CD4-positive, alpha-beta T cell (primary cell): ENCODE measurements at regions of chr21 and their contacts with region 1.

Region 1: DNA sequence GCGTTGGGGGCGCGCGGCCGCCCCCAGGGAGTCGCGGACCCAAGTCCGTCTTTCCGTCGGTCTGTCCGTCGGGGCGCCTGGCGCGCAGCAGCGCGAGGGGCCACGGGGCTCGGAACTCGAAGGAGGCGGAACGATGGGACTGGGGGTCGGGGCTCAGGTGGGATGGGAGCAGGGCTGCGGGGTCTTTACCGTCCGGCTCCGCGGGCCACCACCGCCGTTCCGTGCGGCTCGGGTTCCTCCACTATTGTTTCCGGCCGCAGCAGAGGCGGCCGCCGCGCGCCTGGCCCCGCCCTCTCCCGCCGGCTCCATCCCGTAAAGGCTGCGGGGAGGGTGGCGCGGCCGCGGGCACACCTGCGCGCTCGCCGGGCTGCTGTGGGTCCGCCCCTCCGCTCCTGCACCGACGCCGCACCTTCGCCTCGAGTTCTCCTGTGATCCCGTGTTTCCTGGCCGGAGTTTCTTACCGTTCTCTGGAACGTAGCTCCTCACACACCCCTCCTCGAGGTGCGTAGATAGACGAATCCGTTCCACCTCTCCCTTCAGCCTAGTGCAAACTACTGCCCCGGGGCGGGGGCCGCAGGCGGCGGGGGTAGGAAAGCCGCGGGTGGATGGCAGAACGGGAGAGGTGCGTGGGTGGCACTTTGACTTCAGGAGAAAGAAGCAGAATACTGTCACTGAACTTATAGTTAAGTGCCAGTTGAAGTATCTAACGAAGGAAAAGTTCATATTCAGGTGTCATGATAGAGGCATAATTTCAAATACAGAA is at the start of gene C21orf91:
- DNase-seq: peak; percentile 74 to 93 (median 86)
- ATAC-seq: peak; percentile 85
- H3K4me3 ChIP-seq: peak within 1 kb of the TSS; percentile 82
- H3K4me3 Mint-ChIP-seq: peak within 1 kb of the TSS; percentile 97
- H3K27ac ChIP-seq: peak within 1 kb of the TSS; percentile 88 to 92
- H3K27ac Mint-ChIP-seq: peak within 1 kb of the TSS; percentile 95
- H3K4me1 ChIP-seq: peaks cover 21% of the 10 kb centered on the region
- H3K4me1 Mint-ChIP-seq: peaks cover 53% of the 10 kb centered on the region
- H3K27me3 ChIP-seq: no peaks in the 10 kb centered on the region
- H3K27me3 Mint-ChIP-seq: no peaks in the 10 kb centered on the region
- CTCF ChIP-seq: no peak
- total RNA-seq, gene C21orf91: 40.9 to 42.2 TPM

Region 2: GRCh38 chr21:17512253-17513213 is 306.8 kb before region 1 on chr21 and contains the start of gene CXADR:
- CTCF ChIA-PET with region 1: no interaction called
- POLR2A ChIA-PET with region 1: no interaction called
- intact Hi-C with region 1: loop called in 1 of 2 experiments (anchors 10 kb)
- DNase-seq: peak; percentile 58 to 93 (median 77)
- ATAC-seq: peak; percentile 81
- H3K4me3 ChIP-seq: peak within 1 kb of the TSS; percentile 70
- H3K4me3 Mint-ChIP-seq: peak within 1 kb of the TSS; percentile 92
- H3K27ac ChIP-seq: no peak within 1 kb of the TSS
- H3K27ac Mint-ChIP-seq: peak within 1 kb of the TSS; percentile 40
- H3K4me1 ChIP-seq: peaks cover 21% of the 10 kb centered on the region
- H3K4me1 Mint-ChIP-seq: peaks cover 18% of the 10 kb centered on the region
- H3K27me3 ChIP-seq: no peaks in the 10 kb centered on the region
- H3K27me3 Mint-ChIP-seq: peaks cover 10% of the 10 kb centered on the region
- CTCF ChIP-seq: peak; percentile 56
- total RNA-seq, gene CXADR: 0.52 to 0.53 TPM

Region 3: GRCh38 chr21:17679002-17679600 is 140.2 kb before region 1 on chr21:
- CTCF ChIA-PET with region 1: no interaction called
- POLR2A ChIA-PET with region 1: no interaction called
- intact Hi-C with region 1: loop called in 1 of 2 experiments (anchors 5 kb)
- DNase-seq: peak in 5 of 14 experiments; percentile 1 to 81 (median 79)
- ATAC-seq: peak; percentile 97
- H3K4me3 ChIP-seq: no peak overlapping the region
- H3K4me3 Mint-ChIP-seq: no peak overlapping the region
- H3K27ac ChIP-seq: no peak overlapping the region
- H3K27ac Mint-ChIP-seq: no peak overlapping the region
- H3K4me1 ChIP-seq: no peaks in the 10 kb centered on the region
- H3K4me1 Mint-ChIP-seq: no peaks in the 10 kb centered on the region
- H3K27me3 ChIP-seq: no peaks in the 10 kb centered on the region
- H3K27me3 Mint-ChIP-seq: no peaks in the 10 kb centered on the region
- CTCF ChIP-seq: peak; percentile 81

Region 4: DNA sequence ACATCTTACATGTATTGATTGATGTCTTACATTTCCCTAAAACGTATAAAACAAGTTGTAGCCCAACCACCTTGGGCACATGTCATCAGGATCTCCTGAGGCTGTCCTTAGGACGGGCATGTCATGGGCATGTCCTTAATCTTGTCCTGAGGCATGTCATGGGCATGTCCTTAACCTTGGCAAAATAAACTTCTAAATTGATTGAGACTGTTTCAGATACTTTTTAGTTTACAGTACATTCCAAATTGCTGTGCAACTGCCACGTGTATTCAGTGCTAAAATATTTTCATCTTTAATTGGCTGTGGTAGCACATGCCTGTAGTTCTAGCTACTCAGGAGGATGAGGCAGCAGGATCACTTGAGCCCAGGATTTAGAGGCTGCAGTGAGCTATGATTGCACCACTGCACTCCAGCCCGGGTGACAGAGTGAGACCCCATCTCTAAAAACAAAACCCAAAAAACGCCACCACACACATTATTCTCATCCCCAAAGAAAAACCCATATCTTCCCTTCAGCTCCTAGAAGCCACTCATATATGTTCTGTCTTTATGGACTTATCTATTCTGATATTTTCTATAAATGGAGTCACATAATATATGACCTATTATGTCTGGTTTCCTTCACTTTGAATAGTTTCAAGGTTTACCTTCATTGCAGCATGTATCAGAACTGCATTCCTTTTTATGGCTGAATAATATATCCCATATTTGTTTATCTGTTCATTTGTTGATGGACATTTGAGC is 110.6 kb before region 1 on chr21:
- CTCF ChIA-PET with region 1: no interaction called
- POLR2A ChIA-PET with region 1: no interaction called
- intact Hi-C with region 1: loop called in 1 of 2 experiments (anchors 5 kb)
- DNase-seq: no peak
- ATAC-seq: no peak
- H3K4me3 ChIP-seq: no peak overlapping the region
- H3K4me3 Mint-ChIP-seq: no peak overlapping the region
- H3K27ac ChIP-seq: no peak overlapping the region
- H3K27ac Mint-ChIP-seq: no peak overlapping the region
- H3K4me1 ChIP-seq: no peaks in the 10 kb centered on the region
- H3K4me1 Mint-ChIP-seq: no peaks in the 10 kb centered on the region
- H3K27me3 ChIP-seq: no peaks in the 10 kb centered on the region
- H3K27me3 Mint-ChIP-seq: no peaks in the 10 kb centered on the region
- CTCF ChIP-seq: no peak

Region 5: DNA sequence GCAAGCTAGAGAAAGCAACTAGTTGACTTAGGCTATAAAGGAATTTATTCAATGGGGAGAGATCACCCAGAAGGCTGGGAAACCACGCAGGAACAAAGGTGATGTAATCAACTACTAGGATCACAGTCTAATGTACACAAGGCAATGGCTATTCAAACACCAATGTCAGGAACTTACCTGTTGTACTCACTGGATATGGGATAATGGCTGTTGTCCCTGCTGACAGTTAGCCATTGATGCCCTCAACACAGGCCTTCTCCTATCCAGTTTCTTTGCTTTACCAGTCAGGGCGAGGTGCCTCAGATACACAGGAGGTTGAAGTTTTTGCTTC is 32.5 kb before region 1 on chr21:
- CTCF ChIA-PET with region 1: interaction called, 3 read pairs
- POLR2A ChIA-PET with region 1: interaction called, 167 read pairs
- intact Hi-C with region 1: loop called (anchors 1 to 2 kb)
- DNase-seq: no peak
- ATAC-seq: no peak
- H3K4me3 ChIP-seq: no peak overlapping the region
- H3K4me3 Mint-ChIP-seq: peak overlapping the region; percentile 79
- H3K27ac ChIP-seq: peak overlapping the region; percentile 30 to 45
- H3K27ac Mint-ChIP-seq: peak overlapping the region; percentile 93
- H3K4me1 ChIP-seq: peaks cover 51% of the 10 kb centered on the region
- H3K4me1 Mint-ChIP-seq: peaks cover 94% of the 10 kb centered on the region
- H3K27me3 ChIP-seq: no peaks in the 10 kb centered on the region
- H3K27me3 Mint-ChIP-seq: no peaks in the 10 kb centered on the region
- CTCF ChIP-seq: no peak

Region 6: DNA sequence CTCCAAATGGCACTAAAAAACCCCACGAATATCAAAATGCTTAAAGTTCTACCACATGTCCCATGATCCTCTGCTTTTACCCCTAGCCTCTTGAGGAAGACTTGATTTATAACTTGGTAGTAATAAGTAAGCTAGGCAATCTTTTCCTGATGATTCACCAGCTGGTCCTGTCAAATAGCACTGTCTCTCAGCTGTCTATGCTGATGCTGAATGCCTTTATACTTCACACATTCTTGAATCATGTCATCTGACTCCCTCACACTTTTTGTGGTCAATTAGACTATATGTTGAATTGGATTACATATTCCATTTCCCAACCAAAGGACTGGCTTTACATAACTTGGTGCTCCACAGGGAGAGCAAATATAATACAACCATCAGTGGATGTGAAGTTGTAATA is 16.7 kb before region 1 on chr21:
- CTCF ChIA-PET with region 1: interaction called, 7 read pairs
- POLR2A ChIA-PET with region 1: interaction called, 16 read pairs
- intact Hi-C with region 1: loop called in 1 of 2 experiments (anchors 2 kb)
- DNase-seq: no peak
- ATAC-seq: no peak
- H3K4me3 ChIP-seq: no peak overlapping the region
- H3K4me3 Mint-ChIP-seq: no peak overlapping the region
- H3K27ac ChIP-seq: no peak overlapping the region
- H3K27ac Mint-ChIP-seq: peak overlapping the region; percentile 58
- H3K4me1 ChIP-seq: peaks cover 17% of the 10 kb centered on the region
- H3K4me1 Mint-ChIP-seq: peaks cover 67% of the 10 kb centered on the region
- H3K27me3 ChIP-seq: no peaks in the 10 kb centered on the region
- H3K27me3 Mint-ChIP-seq: no peaks in the 10 kb centered on the region
- CTCF ChIP-seq: no peak